ENCODE measurements at regions of chr5 and their contacts with region 1.

Region 1: DNA sequence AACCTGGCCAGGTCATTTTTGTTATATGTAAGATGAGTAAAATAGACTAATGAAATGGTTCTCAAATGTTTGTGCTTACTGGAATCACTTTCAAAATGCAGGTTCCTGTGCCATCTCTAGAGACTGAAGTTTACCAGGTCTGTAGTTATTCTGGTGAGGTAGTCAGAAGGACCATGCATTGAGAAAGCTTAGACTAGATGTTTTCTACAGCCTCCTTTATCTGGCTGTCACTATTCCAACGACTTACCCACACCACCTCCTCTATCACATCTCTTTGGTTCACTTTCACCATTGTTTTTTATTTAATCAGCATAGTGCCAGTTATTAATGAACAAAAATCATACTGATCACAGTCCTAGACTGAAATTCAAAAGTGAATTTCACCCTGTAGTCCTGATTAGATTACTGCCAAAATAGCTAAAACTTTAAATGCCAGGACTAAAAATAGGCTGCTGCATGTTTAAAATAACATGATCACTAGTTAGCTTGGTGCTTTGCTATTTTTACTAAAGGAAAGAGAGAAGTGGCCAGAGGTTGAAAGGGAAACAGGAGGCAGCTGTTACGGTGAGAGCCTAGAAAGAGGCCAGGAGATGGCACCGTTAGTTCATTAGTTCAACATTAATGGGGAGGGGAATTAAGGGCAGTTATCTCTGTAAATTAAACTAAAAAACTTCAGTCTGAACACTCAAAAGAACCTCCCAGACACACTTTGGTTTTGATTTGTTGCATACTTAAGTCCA is 13.9 kb upstream of the FNIP1 start:
- DNase-seq: no peak
- H3K4me3 ChIP-seq: no peak overlapping the region
- H3K27ac ChIP-seq: no peak overlapping the region
- H3K4me1 ChIP-seq: no peaks in the 10 kb centered on the region
- H3K27me3 ChIP-seq: no peaks in the 10 kb centered on the region
- CTCF ChIP-seq: no peak
- EP300 ChIP-seq: no peak
- POLR2A ChIP-seq: no peak

Region 2: GRCh38 chr5:132839426-132840301 is 1029.0 kb after region 1 on chr5:
- intact Hi-C with region 1: loop called in 1 of 4 experiments (anchors 5 kb)
- DNase-seq: no peak
- H3K4me3 ChIP-seq: no peak overlapping the region
- H3K27ac ChIP-seq: no peak overlapping the region
- H3K4me1 ChIP-seq: no peaks in the 10 kb centered on the region
- H3K27me3 ChIP-seq: no peaks in the 10 kb centered on the region
- CTCF ChIP-seq: no peak
- EP300 ChIP-seq: no peak
- POLR2A ChIP-seq: no peak

Measured in ovary (tissue), 10 donors.